ENCODE measurements at regions of chr10 and their contacts with region 1.

Region 1: DNA sequence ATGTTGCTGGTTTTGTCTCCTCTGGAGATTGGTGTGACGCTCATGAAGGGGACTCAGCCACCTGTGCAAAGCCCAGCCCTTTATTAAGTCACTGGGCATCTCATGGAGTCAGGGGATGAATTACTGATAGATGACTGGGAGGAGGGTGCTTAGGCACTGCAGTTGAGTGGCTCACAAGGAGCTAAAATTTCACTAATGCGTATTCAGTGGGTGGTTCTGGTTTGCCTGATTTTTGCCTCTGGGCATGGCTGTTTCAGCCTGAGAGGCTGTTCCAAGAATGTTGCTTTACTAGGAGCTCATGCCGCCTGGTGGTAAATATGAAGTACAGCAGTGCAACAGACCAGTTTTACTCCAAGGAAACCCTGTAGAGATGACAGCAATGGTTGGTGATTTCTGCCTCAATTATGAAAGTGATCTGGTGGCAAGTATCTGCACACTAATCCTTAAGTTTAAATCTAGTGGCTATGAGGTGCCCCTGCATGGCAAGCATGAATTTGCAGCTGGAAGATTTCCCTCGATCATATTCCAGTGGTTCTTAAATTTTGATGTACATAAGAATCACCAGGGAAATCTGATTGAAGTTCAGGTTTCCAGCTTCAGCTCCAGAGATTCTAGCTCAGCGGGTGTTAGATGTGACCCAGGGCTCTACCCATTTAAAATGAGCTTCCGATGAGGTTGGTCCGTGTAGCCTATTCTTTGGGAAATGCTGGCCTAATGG is 19.9 kb downstream of the ACTA2 start:
- DNase-seq: peak; percentile 70 to 85
- H3K4me3 ChIP-seq: no peak overlapping the region
- H3K27ac ChIP-seq: peak overlapping the region; percentile 67 to 76
- H3K4me1 ChIP-seq: peaks cover 0 to 20% (median 9%) of the 10 kb centered on the region in 4 donors
- H3K27me3 ChIP-seq: no peaks in the 10 kb centered on the region
- CTCF ChIP-seq: peak; percentile 89 to 95

Region 2: GRCh38 chr10:88608052-88608732 is 324.5 kb before region 1 on chr10:
- intact Hi-C with region 1: no loop called
- DNase-seq: no peak
- H3K4me3 ChIP-seq: no peak overlapping the region
- H3K27ac ChIP-seq: no peak overlapping the region
- H3K4me1 ChIP-seq: no peaks in the 10 kb centered on the region
- H3K27me3 ChIP-seq: no peaks in the 10 kb centered on the region
- CTCF ChIP-seq: no peak

Region 3: GRCh38 chr10:89217057-89217990 is 284.6 kb after region 1 on chr10:
- intact Hi-C with region 1: loop called (anchors 10 kb)
- DNase-seq: no peak
- H3K4me3 ChIP-seq: no peak overlapping the region
- H3K27ac ChIP-seq: peak overlapping the region; percentile 41 to 45
- H3K4me1 ChIP-seq: peaks cover 0 to 6% (median 1%) of the 10 kb centered on the region in 4 donors
- H3K27me3 ChIP-seq: no peaks in the 10 kb centered on the region
- CTCF ChIP-seq: peak; percentile 68 to 69